ENCODE measurements at regions of chr2 and their contacts with region 1.

Region 1: DNA sequence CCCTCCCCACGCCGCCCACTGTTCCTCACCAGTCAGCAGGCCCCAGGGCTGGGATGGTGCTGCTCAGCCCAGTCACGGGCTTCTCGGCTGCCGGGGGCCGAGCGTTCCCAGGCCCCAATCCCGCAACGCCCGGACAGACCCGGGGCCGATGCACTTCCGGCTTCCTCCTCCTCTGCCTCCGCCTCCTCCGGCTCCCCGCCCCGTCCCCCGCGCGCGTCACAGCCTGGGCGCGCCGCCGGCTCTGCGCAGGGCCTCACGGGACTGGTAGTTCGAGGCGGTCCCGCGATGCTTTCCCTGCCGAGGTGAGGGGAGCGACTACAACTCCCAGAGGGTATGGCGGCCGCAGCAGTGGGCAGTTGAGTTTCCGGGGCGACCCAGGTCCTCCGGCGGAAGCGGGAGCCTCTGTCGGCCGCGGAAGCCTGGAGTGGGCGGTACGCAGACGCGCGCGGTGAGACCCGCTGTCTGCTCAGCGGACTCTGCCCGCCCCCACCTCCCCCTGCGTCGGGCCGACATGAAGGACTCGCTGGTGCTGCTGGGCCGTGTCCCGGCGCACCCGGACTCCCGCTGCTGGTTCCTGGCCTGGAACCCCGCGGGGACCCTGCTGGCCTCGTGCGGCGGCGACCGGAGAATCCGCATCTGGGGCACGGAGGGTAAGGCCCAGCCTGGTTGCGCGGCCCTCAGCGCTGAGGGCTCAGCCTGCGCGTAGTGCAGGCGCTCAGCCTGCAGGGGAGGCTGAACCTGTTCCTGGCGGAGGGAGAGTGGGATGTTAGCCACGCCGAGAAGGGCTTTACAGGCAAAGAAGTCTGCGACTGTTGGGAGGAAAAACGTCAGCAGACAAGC is at the starts of genes CIAO1 and TMEM127:
- DNase-seq: peak; percentile 99
- ATAC-seq: peak; percentile 96 to 97
- total RNA-seq, gene CIAO1: 50.0 to 52.7 TPM
- total RNA-seq, gene TMEM127: 64.4 to 86.6 TPM

Region 2: DNA sequence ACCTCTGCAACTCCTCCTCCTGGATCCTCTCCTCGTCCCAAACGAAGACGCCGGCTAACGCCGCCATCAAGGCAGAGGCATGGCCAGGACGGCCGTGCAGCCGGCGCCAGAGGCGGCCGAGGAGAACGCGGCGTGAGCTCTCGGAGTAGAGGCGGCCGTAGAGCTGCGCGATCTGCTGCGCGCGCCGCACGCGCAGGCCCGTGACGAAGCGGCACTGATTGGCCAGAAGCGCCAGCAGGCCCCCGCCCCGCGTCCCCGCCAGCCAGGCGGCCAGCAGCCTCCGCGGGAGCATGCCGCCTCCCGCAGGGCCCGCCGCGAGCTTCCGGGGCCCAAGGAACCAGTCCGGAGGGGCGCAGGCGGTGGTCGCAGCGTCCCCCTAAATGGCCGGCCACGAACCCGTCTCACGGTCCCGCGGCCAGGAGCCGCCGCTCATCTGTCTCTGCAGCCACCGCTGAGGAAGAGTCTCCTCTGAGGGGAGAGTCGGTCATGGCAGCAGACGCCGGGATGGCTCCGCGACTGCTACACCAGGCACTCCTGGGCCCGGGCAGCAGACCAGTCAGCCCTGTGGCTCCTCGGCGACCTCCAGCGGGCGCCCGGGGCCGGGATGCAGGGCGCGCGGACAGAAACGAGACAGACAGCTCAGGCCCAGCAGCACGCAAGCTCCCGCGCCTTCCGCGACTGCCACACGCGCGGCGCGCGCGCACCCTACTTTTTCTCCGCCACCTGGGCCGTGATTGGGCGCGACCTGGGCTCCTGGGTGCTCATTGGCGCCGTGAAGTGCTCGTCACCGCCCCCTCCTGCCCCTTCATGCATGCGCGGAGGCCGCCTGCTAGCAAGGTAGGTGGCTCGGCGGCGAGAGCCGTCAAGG is 57.7 kb before region 1 on chr2 and contains the start of gene STARD7:
- intact Hi-C with region 1: loop called in 1 of 2 experiments (anchors 2 kb)
- DNase-seq: peak; percentile 99
- ATAC-seq: peak; percentile 96 to 98
- total RNA-seq, gene STARD7: 135 to 185 TPM